Colonic mucosa (tissue), 4 donors: ENCODE measurements at regions of chrX and their contacts with region 1.

Region 1: DNA sequence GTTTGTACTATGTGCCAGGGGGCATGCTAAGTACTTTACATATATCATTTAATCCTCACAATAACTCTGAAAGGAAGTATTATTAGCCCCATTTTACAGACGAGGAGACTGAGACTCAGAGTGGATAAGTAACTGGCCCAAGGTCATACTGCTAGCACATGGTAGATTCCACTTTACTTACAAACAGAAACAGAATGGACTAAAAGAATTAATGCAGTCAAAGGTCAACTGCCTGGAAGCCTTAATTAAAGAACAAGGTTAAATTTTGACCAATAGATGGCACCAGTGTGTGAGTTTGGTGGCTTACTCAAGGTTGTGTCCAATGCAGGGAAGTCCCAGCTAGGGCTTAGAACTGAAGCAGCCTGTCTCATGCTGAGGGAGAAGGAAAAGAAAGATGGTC is 4.7 kb downstream of the RIPPLY1 start:
- DNase-seq: no peak
- H3K4me3 ChIP-seq: no peak overlapping the region
- H3K27ac ChIP-seq: no peak overlapping the region
- H3K4me1 ChIP-seq: no peaks in the 10 kb centered on the region
- H3K27me3 ChIP-seq: no peaks in the 10 kb centered on the region
- CTCF ChIP-seq: peak; percentile 22

Region 2: DNA sequence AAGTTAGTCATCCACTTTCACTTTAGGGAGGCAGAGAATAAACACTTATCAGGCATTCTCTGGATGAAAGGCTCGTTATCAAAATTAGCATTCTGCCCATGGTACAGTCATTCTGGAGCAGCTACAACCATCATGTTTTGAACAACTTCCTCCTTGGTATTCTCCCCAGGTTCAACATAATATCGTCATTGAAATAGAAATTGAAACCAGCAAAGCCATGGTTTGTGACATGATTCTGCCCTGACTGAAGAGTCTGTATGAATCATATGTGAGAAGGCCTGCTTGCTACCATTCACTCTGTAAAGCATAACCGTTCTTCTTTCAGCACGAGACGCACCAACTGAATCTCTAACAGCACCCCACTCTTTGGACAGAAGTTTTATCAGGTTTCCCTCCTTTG is 414.2 kb before region 1 on chrX:
- intact Hi-C with region 1: no loop called
- DNase-seq: no peak
- H3K4me3 ChIP-seq: no peak overlapping the region
- H3K27ac ChIP-seq: no peak overlapping the region
- H3K4me1 ChIP-seq: no peaks in the 10 kb centered on the region
- H3K27me3 ChIP-seq: no peaks in the 10 kb centered on the region
- CTCF ChIP-seq: no peak

Region 3: DNA sequence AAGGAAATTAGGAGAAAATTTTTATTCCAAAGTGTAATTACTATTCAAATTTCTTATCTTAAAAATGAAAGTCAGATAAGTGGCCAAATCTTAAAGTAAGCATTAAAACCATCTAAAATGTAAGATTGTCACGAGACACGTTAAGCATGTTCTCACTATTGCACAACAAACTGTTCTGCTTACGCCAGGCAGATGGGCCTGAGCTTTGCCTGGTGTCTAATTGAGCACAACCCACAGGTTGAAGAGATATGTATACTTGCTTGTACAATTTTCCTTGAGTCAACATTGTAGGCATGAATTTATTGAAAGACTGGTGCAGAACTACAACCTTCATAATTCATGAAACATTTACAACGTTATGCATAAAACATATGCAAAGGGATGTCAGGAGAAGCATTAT is 168.1 kb before region 1 on chrX:
- intact Hi-C with region 1: no loop called
- DNase-seq: no peak
- H3K4me3 ChIP-seq: no peak overlapping the region
- H3K27ac ChIP-seq: no peak overlapping the region
- H3K4me1 ChIP-seq: no peaks in the 10 kb centered on the region
- H3K27me3 ChIP-seq: no peaks in the 10 kb centered on the region
- CTCF ChIP-seq: no peak

Region 4: DNA sequence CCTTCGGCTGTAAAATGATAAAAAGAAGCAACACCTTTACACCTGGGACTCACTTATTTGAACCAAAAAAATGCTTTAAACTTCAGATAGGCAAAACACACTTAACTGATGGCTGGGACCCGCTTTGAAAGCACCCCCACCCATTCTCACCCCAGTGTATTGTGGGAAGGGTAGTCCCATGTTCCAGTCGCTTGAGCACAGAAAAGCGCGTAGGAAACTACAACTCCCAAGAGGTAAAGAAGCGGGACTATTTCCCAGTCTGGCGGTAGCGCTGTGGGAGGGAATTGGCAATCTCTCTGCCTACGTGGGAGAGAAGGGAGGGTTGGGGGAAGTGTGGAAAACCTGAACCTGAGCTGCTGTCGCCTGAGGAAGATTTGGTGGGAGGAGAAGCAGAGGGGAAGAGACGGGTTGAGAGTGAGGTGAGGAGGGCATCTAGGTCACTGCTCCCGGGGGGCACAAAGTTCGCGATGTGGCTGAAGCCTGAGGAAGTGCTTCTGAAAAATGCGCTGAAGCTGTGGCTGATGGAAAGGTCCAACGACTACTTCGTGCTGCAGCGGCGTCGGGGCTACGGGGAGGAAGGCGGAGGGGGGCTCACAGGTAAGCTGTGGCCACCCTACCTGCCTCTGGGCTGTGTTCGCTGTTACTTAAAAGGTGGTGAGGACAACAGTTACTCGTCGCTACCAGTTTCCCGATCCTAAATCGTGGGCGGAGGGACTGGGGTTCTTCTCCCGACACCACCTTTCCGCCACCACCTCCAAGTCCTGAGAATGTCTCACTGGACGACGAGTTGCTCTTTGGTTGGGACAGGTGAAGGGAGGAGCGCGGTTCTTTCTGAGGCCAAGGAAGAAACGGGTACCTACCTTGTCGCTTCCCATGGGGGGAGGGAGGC is 95.8 kb before region 1 on chrX and contains the start of gene TBC1D8B:
- intact Hi-C with region 1: no loop called
- DNase-seq: peak; percentile 86
- H3K4me3 ChIP-seq: peak within 1 kb of the TSS; percentile 47
- H3K27ac ChIP-seq: peak within 1 kb of the TSS; percentile 60
- H3K4me1 ChIP-seq: no peaks in the 10 kb centered on the region
- H3K27me3 ChIP-seq: no peaks in the 10 kb centered on the region
- CTCF ChIP-seq: no peak
- total RNA-seq, gene TBC1D8B: 11.6 to 17.9 TPM

Region 5: DNA sequence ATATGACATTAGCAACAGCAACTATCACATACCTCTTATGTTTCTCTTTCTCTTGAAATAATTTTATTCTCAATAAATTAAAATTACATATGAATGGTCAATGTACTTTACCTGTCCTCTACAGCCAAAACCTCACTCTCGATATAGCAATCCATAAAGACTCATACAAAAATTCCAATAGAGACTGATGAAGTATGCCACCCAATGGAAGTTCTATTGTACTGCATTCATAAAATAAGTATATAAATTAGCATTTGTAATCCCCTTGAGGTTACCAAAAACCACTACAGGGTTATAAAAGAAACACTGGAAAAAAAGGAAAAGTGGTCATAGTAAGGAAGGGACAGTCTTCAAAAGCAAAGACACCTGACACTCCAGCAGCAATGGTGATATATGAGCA is 54.5 kb after region 1 on chrX:
- intact Hi-C with region 1: loop called (anchors 5 kb)
- DNase-seq: no peak
- H3K4me3 ChIP-seq: no peak overlapping the region
- H3K27ac ChIP-seq: no peak overlapping the region
- H3K4me1 ChIP-seq: no peaks in the 10 kb centered on the region
- H3K27me3 ChIP-seq: no peaks in the 10 kb centered on the region
- CTCF ChIP-seq: peak; percentile 32

Region 6: GRCh38 chrX:107025545-107025944 is 127.1 kb after region 1 on chrX:
- intact Hi-C with region 1: no loop called
- DNase-seq: no peak
- H3K4me3 ChIP-seq: no peak overlapping the region
- H3K27ac ChIP-seq: no peak overlapping the region
- H3K4me1 ChIP-seq: no peaks in the 10 kb centered on the region
- H3K27me3 ChIP-seq: no peaks in the 10 kb centered on the region
- CTCF ChIP-seq: peak; percentile 34